Heart right ventricle (tissue), 16 donors: ENCODE measurements at regions of chr9 and their contacts with region 1.

Region 1: GRCh38 chr9:79962836-79963235 is 391.1 kb downstream of the TLE4 start:
- DNase-seq: no peak
- ATAC-seq: no peak
- H3K4me3 ChIP-seq: no peak overlapping the region
- H3K27ac ChIP-seq: no peak overlapping the region
- H3K4me1 ChIP-seq: no peaks in the 10 kb centered on the region
- H3K27me3 ChIP-seq: peaks cover 0 to 27% (median 0%) of the 10 kb centered on the region in 7 donors
- CTCF ChIP-seq: no peak

Region 2: GRCh38 chr9:79477955-79478771 is 484.7 kb before region 1 on chr9:
- intact Hi-C with region 1: loop called in 1 of 10 experiments (anchors 10 kb)
- DNase-seq: peak in 1 of 2 donors; percentile 8
- ATAC-seq: no peak
- H3K4me3 ChIP-seq: no peak overlapping the region
- H3K27ac ChIP-seq: no peak overlapping the region
- H3K4me1 ChIP-seq: no peaks in the 10 kb centered on the region
- H3K27me3 ChIP-seq: no peaks in the 10 kb centered on the region
- CTCF ChIP-seq: peak in 5 of 9 donors; percentile 14 to 46 (median 31)